Activated T-helper 1 cell treated with anti-CD3 and anti-CD28 coated beads, Interleukin-12 subunit alpha, Interleukin-12 subunit beta, Interleukin-2, Interleukin-4 antibody, amounts not matched to agents 30 ng/mL and 10 ng/mL and 1 ng/mL, durations not matched to agents 14 hours and 24 hours and 36 hours (primary cell): ENCODE measurements at regions of chr2 and their contacts with region 1.

Region 1: GRCh38 chr2:57759822-57760300 is 286.7 kb upstream of the VRK2 start:
- DNase-seq: peak; percentile 59
- H3K4me3 Mint-ChIP-seq: no peak overlapping the region
- H3K27ac Mint-ChIP-seq: no peak overlapping the region
- H3K4me1 Mint-ChIP-seq: no peaks in the 10 kb centered on the region
- H3K27me3 Mint-ChIP-seq: peaks cover 2% of the 10 kb centered on the region

Region 2: GRCh38 chr2:57776916-57777315 is 17.1 kb after region 1 on chr2:
- intact Hi-C with region 1: loop called (anchors 1 kb)
- DNase-seq: no peak
- H3K4me3 Mint-ChIP-seq: no peak overlapping the region
- H3K27ac Mint-ChIP-seq: no peak overlapping the region
- H3K4me1 Mint-ChIP-seq: no peaks in the 10 kb centered on the region
- H3K27me3 Mint-ChIP-seq: peaks cover 2% of the 10 kb centered on the region

Region 3: GRCh38 chr2:57796527-57796926 is 36.7 kb after region 1 on chr2:
- intact Hi-C with region 1: no loop called
- DNase-seq: no peak
- H3K4me3 Mint-ChIP-seq: no peak overlapping the region
- H3K27ac Mint-ChIP-seq: no peak overlapping the region
- H3K4me1 Mint-ChIP-seq: no peaks in the 10 kb centered on the region
- H3K27me3 Mint-ChIP-seq: peaks cover 2% of the 10 kb centered on the region

Region 4: GRCh38 chr2:58448065-58448507 is 688.2 kb after region 1 on chr2:
- intact Hi-C with region 1: loop called (anchors 1 kb)
- DNase-seq: no peak
- H3K4me3 Mint-ChIP-seq: no peak overlapping the region
- H3K27ac Mint-ChIP-seq: no peak overlapping the region
- H3K4me1 Mint-ChIP-seq: no peaks in the 10 kb centered on the region
- H3K27me3 Mint-ChIP-seq: peaks cover 5% of the 10 kb centered on the region

Region 5: GRCh38 chr2:58569475-58570185 is 809.8 kb after region 1 on chr2:
- intact Hi-C with region 1: loop called (anchors 5 kb)
- DNase-seq: peak; percentile 2
- H3K4me3 Mint-ChIP-seq: no peak overlapping the region
- H3K27ac Mint-ChIP-seq: no peak overlapping the region
- H3K4me1 Mint-ChIP-seq: peaks cover 28% of the 10 kb centered on the region
- H3K27me3 Mint-ChIP-seq: peaks cover 9% of the 10 kb centered on the region